Lower lobe of right lung (tissue), 2 donors: ENCODE measurements at regions of chr3 and their contacts with region 1.

Region 1: GRCh38 chr3:50542177-50543034 is 25.1 kb downstream of the C3orf18 start:
- DNase-seq: peak; percentile 70
- ATAC-seq: peak; percentile 80 to 84
- H3K4me3 ChIP-seq: no peak overlapping the region
- H3K27ac ChIP-seq: no peak overlapping the region
- H3K4me1 ChIP-seq: no peaks in the 10 kb centered on the region
- H3K27me3 ChIP-seq: no peaks in the 10 kb centered on the region
- CTCF ChIP-seq: peak; percentile 87

Region 2: DNA sequence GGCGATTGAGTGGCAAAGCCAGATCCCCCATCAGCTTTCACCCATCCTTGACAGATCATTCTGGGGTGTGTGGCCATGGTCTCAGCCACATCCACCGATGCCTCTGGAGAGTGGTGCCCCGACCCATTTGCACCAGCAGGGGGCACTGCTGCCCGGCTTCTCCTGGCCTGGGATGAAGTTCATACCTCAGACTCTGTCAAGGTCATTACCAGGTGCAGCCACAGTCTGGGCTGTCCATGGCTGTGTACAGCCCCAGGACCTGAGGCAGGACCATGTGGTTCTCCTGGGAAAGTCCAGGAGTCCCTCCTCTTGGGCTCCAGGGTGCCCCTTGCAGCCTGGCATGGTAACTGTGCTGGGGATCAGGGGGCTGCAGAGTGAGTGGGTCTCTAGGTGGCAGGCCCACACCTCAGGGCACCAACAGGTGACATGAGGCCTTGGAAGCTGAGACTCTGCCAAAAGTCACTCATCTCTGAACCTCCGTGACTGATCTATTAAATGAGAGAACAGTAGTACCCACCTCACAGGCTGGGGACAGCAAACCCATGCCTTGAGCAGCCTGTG is 106.2 kb before region 1 on chr3:
- intact Hi-C with region 1: loop called (anchors 10 kb)
- DNase-seq: peak; percentile 80
- ATAC-seq: peak; percentile 83 to 86
- H3K4me3 ChIP-seq: no peak overlapping the region
- H3K27ac ChIP-seq: peak overlapping the region; percentile 18
- H3K4me1 ChIP-seq: peaks cover 45% of the 10 kb centered on the region
- H3K27me3 ChIP-seq: no peaks in the 10 kb centered on the region
- CTCF ChIP-seq: peak; percentile 93

Region 3: DNA sequence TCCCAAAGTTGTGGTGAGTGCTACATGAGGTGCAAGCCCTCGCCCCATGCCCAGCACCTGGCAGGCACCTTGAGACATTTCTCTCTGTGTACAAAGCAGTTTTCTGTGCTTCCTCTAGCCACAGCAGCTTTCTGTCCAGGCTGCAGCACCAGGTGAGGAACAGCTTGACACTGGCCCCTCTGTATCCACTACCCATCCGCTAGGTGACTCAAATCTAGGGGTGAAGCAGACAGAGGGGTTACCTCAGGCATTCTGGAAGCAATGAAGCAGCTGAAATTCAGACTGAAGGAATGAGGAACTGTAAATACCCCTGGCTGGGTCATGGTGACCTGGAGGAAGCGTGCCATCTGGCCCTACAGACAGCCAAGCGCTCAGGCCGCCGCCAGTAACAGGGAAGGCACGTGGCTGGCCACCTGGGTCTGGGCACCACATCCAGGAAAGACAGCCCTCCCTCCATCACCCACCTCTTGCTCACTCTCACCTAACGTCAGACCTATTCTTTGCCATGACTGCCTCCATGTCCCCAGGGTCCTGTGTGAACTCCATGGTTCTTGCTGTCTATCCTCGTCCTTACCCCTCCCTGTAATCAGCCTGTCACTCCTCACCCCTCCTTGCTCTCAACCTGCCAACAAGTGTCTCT is 62.7 kb after region 1 on chr3:
- intact Hi-C with region 1: no loop called
- DNase-seq: no peak
- ATAC-seq: no peak
- H3K4me3 ChIP-seq: no peak overlapping the region
- H3K27ac ChIP-seq: peak overlapping the region; percentile 91
- H3K4me1 ChIP-seq: peaks cover 99% of the 10 kb centered on the region
- H3K27me3 ChIP-seq: no peaks in the 10 kb centered on the region
- CTCF ChIP-seq: no peak